ENCODE measurements at regions of chr12 and their contacts with region 1.

Region 1: GRCh38 chr12:131872185-131873051 is 22.0 kb upstream of the ULK1 start:
- DNase-seq: peak; percentile 93 to 99
- H3K4me3 ChIP-seq: 0 out of 2 replicates have a peak overlapping the region, but pooled peaks have one; percentile 37
- H3K27ac ChIP-seq: peak overlapping the region; percentile 62
- H3K4me1 ChIP-seq: peaks cover 68% of the 10 kb centered on the region
- H3K27me3 ChIP-seq: no peaks in the 10 kb centered on the region
- CTCF ChIP-seq: no peak

Region 2: DNA sequence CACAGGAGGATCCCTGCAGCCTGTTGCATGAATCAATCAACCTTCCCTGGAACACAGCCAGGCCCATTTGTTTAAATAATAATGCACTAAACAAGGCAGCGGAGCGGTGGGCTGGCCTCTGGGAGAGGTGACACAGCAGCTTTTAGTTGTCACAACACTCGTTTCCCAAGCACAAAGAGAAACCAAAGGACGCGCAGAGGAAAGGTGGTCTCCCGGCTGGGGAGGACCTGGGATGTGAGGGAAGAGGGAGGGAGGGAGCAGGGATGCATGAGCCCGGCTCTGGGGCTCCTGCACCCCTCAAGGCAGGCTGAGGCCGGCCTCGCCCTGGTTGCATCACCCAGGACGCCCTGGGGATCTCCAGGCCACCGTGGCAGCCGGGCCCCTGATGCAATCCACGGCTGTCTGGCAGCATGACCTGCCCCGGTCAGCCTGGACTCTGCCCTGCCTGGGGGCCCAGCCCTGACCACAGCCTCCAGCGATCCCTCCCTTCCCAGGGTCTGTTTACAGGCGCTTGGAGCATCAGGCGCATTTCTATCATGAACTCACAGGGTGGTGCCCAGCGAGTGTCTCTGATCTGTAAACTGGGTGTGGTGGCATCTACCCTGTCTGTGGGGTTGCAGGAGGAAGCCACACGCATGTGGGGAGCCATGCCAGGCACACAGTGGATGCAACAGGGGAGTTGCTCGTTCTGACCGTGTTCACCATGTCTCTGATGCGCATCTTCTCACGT is 11.7 kb before region 1 on chr12:
- CTCF ChIA-PET with region 1: no interaction called
- POLR2A ChIA-PET with region 1: no interaction called
- intact Hi-C with region 1: loop called (anchors 1 kb)
- DNase-seq: peak; percentile 94 to 95
- H3K4me3 ChIP-seq: peak overlapping the region; percentile 43; the same call in 1 of the 2 replicates
- H3K27ac ChIP-seq: peak overlapping the region; percentile 94
- H3K4me1 ChIP-seq: peaks cover 74% of the 10 kb centered on the region
- H3K27me3 ChIP-seq: no peaks in the 10 kb centered on the region
- CTCF ChIP-seq: no peak

Measured in PC-9 (cell line).